Posterior vena cava (tissue), 2 donors: ENCODE measurements at regions of chr5 and their contacts with region 1.

Region 1: DNA sequence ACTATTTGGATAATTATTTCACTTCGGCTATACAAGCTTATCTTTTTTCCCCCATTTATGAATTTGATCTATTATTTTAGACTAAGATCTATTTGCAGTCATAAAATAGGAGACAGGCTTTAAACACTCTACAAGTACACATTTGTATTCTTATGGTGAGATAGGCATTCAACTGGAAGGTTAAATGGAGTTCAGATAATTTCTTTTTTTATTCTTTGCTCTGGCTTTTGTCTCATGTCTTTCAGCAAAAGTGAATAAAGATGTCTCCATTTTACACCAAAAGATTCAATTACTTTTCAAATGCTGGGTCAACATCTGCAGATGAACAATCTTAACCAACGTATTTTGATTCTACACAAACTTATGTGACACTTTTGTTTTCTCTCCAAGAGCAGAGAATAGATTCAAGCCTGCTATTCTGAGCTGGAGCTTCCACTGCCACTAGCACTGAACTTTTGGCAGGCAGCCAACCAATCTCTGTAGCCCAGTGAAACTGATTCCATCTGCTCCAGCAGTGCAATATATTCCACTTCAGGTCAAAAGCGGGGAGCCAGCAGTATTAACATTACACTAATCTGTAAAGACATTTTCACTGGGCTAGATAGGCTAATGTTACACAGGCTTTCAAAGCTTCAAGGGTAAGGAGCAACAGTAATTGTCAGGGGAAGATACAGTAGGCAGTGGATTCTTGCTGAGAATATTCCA is 452.0 kb upstream of the ZNF608 start:
- DNase-seq: peak; percentile 79

Region 2: GRCh38 chr5:125856949-125857348 is 658.5 kb after region 1 on chr5:
- intact Hi-C with region 1: loop called in 1 of 2 experiments (anchors 10 kb)
- DNase-seq: no peak